Spleen (tissue), 13 donors: ENCODE measurements at regions of chr5 and their contacts with region 1.

Region 1: DNA sequence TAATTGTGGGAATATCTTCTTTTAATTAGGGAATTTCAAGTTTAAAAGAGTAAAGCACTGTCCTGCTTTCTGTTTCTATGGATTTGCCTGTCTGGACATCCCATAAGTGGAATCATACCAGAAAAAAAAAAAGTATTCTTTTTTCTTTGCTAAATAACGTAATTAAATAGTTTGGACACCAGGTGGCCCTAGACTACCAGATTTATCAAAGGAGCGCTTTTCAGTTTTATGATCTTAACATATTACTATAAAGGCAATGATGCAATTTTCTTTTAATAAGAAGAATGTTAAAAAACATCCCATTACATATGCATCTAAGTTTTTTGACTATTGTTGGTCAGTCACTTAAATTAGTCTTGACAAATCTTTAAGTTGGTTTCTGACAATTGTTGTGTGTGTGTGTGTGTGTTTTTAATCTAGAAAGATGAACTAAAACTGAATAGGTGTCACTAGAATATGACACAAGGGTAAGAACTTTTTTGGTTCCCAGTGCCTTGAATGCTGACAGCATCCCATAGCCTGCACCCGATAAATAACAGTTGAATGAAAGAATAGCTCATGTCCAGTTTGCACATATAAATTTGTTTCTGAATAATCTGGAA is 49.5 kb downstream of the C5orf22 start:
- DNase-seq: no peak
- H3K4me3 ChIP-seq: no peak overlapping the region
- H3K27ac ChIP-seq: no peak overlapping the region
- H3K4me1 ChIP-seq: no peaks in the 10 kb centered on the region
- H3K27me3 ChIP-seq: peaks cover 0 to 28% (median 0%) of the 10 kb centered on the region in 7 donors
- CTCF ChIP-seq: peak in 7 of 11 experiments; percentile 17 to 50 (median 44)
- POLR2A ChIP-seq: no peak

Region 2: DNA sequence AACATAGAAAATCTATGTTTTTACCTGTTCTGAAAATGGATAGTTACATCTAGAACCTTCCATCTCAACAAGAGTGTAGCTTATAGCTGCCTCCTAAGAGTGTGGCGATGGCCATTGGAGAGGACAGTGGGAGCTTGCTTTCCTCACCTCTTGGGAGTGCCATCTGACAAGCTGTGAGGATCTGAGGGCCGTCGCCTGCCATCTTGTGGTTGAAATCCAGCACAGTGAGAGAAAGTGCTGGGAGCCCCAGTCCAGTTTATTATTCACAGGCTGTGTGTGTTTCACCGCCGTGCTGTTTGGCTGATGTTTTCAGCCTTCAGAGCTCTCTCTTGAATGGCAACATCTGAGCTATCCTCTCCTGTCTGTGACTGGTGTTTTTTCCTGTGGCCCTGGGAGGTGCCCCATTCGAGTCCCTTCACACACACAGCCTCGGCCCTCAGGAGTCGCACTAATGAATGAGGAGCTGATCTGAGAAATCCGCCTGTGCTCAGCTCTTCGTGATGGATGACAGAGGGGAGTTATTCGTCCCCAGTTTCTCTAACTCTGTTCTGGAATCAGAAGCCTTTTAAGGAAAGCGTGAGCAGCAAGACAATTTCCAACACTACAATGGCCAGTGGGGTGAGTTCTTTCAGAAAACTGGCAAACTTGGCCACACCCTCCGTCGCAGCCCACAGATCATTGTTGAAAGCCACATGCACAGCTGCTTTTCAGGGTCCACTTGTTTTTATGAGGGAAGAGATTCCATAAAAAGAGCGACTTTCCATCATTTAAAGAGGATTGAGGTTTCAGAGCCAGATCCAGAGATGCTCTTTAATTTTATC is 227.7 kb after region 1 on chr5:
- intact Hi-C with region 1: loop called (anchors 5 kb)
- DNase-seq: no peak
- H3K4me3 ChIP-seq: no peak overlapping the region
- H3K27ac ChIP-seq: no peak overlapping the region
- H3K4me1 ChIP-seq: no peaks in the 10 kb centered on the region
- H3K27me3 ChIP-seq: peaks cover 0 to 9% (median 0%) of the 10 kb centered on the region in 7 donors
- CTCF ChIP-seq: peak in 9 of 11 experiments; percentile 19 to 62 (median 48)
- POLR2A ChIP-seq: no peak

Region 3: GRCh38 chr5:32092938-32093812 is 511.6 kb after region 1 on chr5:
- intact Hi-C with region 1: loop called (anchors 5 kb)
- DNase-seq: no peak
- H3K4me3 ChIP-seq: no peak overlapping the region
- H3K27ac ChIP-seq: no peak overlapping the region
- H3K4me1 ChIP-seq: peaks cover 0 to 9% (median 5%) of the 10 kb centered on the region in 6 donors
- H3K27me3 ChIP-seq: no peaks in the 10 kb centered on the region
- CTCF ChIP-seq: peak; percentile 22 to 75 (median 68)
- POLR2A ChIP-seq: no peak